CD4-positive, alpha-beta memory T cell (primary cell): ENCODE measurements at regions of chr5 and their contacts with region 1.

Region 1: GRCh38 chr5:73565139-73565968 is at the starts of genes ANKRA2 and UTP15:
- DNase-seq: peak; percentile 96 to 98 (median 97)
- H3K4me3 ChIP-seq: peak within 1 kb of the TSS; percentile 45 to 83
- H3K4me3 Mint-ChIP-seq: peak within 1 kb of the TSS; percentile 95 to 100 (median 99)
- H3K27ac ChIP-seq: peak within 1 kb of the TSS; percentile 99
- H3K27ac Mint-ChIP-seq: peak within 1 kb of the TSS; percentile 98 to 100 (median 99)
- H3K4me1 ChIP-seq: peaks cover 35% of the 10 kb centered on the region
- H3K4me1 Mint-ChIP-seq: peaks cover 26 to 53% (median 39%) of the 10 kb centered on the region in 4 donors
- H3K27me3 ChIP-seq: no peaks in the 10 kb centered on the region
- H3K27me3 Mint-ChIP-seq: no peaks in the 10 kb centered on the region
- total RNA-seq, gene ANKRA2: 51.9 to 59.4 TPM
- total RNA-seq, gene UTP15: 22.6 to 22.7 TPM

Region 2: DNA sequence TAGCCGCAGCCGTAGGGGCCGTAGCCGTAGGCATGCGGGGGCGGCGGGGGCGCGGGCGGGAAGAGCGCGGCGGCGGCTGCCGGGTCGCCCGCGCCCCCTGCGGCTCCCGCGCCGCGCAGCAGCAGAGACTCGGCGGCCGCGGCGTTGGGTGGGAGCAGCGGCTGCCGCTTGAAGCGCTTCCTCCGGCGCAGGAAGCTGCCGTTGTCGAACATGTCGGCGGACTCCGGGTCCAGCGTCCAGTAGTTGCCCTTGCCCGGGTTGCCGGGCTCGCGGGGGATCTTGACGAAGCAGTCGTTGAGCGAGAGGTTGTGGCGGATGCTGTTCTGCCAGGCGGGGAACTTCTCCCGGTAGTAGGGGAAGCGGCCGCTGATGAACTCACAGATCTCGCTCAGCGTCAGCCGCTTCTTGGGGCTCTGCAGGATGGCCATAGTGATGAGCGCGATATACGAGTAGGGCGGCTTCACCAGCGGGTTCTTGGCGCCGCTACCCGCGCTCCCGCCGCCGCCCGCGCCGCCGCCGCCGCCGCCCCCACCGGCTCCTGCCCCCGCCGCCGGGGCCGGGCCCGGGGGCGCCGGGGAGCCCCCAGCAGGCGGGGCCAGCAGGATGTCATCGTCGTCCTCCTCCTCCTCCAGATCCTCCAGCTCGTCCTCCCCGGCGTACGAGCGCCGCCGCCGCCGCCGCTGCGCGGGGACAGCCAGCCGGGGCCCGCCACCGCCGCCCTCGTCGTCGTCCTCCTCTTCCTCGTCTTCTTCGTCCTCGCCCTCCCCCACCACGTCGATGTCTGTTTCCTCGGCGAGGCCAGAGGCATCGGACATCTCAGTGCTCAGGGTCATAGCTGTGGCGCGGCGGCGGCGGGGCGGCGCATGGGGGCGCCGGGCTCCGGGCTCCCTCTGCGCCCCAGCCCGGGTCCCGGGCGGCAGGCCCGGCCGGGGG is 117.6 kb before region 1 on chr5:
- CTCF ChIA-PET with region 1: no interaction called
- POLR2A ChIA-PET with region 1: no interaction called
- intact Hi-C with region 1: loop called (anchors 1 kb)
- DNase-seq: peak; percentile 49 to 58 (median 56)
- H3K4me3 ChIP-seq: peak overlapping the region in 1 of 2 donors; percentile 36
- H3K4me3 Mint-ChIP-seq: peak overlapping the region; percentile 85 to 93 (median 86)
- H3K27ac ChIP-seq: no peak overlapping the region
- H3K27ac Mint-ChIP-seq: peak overlapping the region in 4 of 7 donors; percentile 71 to 90 (median 78)
- H3K4me1 ChIP-seq: peaks cover 22% of the 10 kb centered on the region
- H3K4me1 Mint-ChIP-seq: peaks cover 6 to 28% (median 17%) of the 10 kb centered on the region in 4 donors
- H3K27me3 ChIP-seq: peaks cover 82% of the 10 kb centered on the region
- H3K27me3 Mint-ChIP-seq: peaks cover 54% of the 10 kb centered on the region in 2 donors

Region 3: GRCh38 chr5:73498057-73499008 is 67.0 kb before region 1 on chr5 and contains the start of gene BTF3:
- CTCF ChIA-PET with region 1: interaction called, 3 read pairs
- POLR2A ChIA-PET with region 1: interaction called, 45 read pairs
- intact Hi-C with region 1: loop called (anchors 1 kb)
- DNase-seq: peak; percentile 90 to 96 (median 92)
- H3K4me3 ChIP-seq: peak within 1 kb of the TSS; percentile 77 to 91
- H3K4me3 Mint-ChIP-seq: peak within 1 kb of the TSS; percentile 95 to 99 (median 98)
- H3K27ac ChIP-seq: peak within 1 kb of the TSS; percentile 97
- H3K27ac Mint-ChIP-seq: peak within 1 kb of the TSS; percentile 99 to 100 (median 99)
- H3K4me1 ChIP-seq: peaks cover 38% of the 10 kb centered on the region
- H3K4me1 Mint-ChIP-seq: peaks cover 30 to 49% (median 36%) of the 10 kb centered on the region in 4 donors
- H3K27me3 ChIP-seq: no peaks in the 10 kb centered on the region
- H3K27me3 Mint-ChIP-seq: peaks cover 5 to 7% of the 10 kb centered on the region in 2 donors
- total RNA-seq, gene BTF3: 538 to 557 TPM